ENCODE measurements at regions of chr1 and their contacts with region 1.

Region 1: GRCh38 chr1:83998498-83999315 is at the start of gene TTLL7:
- DNase-seq: no peak
- ATAC-seq: peak; percentile 96
- H3K4me3 ChIP-seq: peak within 1 kb of the TSS; percentile 70 to 81
- H3K27ac ChIP-seq: peak within 1 kb of the TSS; percentile 93
- H3K4me1 ChIP-seq: peaks cover 16% of the 10 kb centered on the region
- H3K27me3 ChIP-seq: no peaks in the 10 kb centered on the region
- CTCF ChIP-seq: peak; percentile 31; the same call in 1 of the 2 replicates
- total RNA-seq, gene TTLL7: 31.4 TPM

Region 2: DNA sequence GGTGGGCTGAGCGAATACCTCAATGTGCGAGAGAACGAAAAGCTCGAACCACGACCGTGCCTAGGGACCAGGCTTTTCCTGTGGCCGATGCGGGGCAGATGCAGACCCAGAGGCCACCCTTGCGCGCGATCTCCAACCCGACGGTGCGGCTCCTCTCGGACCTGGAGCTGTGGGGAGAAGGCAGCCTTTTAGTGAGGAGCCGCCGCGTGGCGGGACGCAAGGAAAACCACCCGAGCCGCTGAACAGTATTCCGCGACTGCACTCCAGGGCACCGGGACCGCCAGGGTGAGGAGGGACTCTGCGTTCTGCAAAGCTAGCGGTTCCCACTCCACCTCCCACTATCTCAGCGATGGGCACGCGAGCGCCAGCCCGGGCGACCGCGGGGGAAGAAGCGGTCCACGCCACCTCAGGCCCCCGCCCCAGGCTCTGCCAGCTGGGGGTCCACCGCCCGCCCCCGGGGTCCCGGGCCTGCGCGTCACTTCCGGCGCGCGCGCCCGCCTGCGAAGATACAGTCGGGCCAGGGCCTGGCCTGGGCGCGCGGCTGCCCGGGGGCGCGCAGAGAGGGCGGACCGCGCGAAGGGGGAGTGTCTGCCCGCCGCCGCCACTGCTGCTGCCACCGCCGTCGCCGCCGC is 78.9 kb after region 1 on chr1:
- CTCF ChIA-PET with region 1: interaction called, 3 read pairs
- POLR2A ChIA-PET with region 1: no interaction called
- in situ Hi-C with region 1: no loop called
- intact Hi-C with region 1: loop called (anchors 10 kb)
- DNase-seq: no peak
- ATAC-seq: peak; percentile 98
- H3K4me3 ChIP-seq: peak overlapping the region; percentile 86 to 88
- H3K27ac ChIP-seq: peak overlapping the region; percentile 97
- H3K4me1 ChIP-seq: peaks cover 20% of the 10 kb centered on the region
- H3K27me3 ChIP-seq: no peaks in the 10 kb centered on the region
- CTCF ChIP-seq: no peak

Measured in Panc1 (cell line).